GM12878 (cell line): ENCODE measurements at regions of chr10 and their contacts with region 1.

Region 1: GRCh38 chr10:95693668-95694534 is at the start of gene TCTN3:
- DNase-seq: peak; percentile 100
- ATAC-seq: peak; percentile 96
- H3K4me3 ChIP-seq: peak within 1 kb of the TSS; percentile 87
- H3K27ac ChIP-seq: peak within 1 kb of the TSS; percentile 79
- H3K4me1 ChIP-seq: peaks cover 13% of the 10 kb centered on the region
- H3K27me3 ChIP-seq: no peaks in the 10 kb centered on the region
- CTCF ChIP-seq: peak; percentile 97 to 100 (median 99); a peak in 5 of 6 replicates
- EP300 ChIP-seq: 0 out of 4 replicates have a peak, but pooled peaks of 1 of the 2 experiments have one; percentile 11
- POLR2A ChIP-seq: peak; percentile 89
- RAD21 ChIP-seq: peak; percentile 100
- polyA plus RNA-seq, gene TCTN3: 20.0 to 24.0 TPM

Region 2: DNA sequence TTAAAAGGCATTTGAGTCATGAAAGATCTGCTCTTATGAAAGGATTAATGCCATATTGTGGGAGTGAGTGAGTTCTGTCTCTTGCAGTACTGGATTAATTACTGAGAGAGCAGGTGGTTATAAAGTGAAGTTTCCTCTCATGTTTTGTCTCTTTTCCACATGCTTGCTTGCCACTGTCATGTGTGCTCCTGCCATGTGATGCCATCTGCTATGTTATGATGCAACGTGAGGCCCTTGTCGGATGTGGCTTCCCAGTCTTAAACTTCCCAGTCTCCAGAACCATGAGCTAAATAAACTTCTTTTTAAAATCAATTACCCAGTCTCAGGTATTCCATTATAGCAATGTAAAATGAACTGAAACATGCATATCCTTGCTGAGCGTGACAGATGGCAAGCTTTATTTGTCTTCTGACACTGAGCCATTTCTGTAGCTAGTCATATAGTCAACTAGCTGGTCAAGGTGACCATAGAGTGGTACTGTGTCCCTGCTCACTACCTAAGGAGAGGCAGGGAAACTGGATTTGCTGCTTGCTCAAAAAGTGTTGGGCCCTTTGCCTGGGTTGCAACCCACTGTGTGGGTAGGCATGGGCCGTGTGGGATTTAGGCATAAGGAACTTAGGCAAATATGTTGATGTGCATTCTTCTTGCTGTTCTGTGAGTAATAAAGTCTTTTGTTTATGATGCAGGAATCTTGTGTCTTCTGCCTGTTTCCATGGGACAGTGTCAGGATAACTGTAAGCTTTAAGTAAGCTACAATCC is 22.7 kb after region 1 on chr10:
- CTCF ChIA-PET with region 1: interaction called, 11 read pairs
- POLR2A ChIA-PET with region 1: interaction called, 3 read pairs
- RAD21 ChIA-PET with region 1: interaction called, 9 read pairs
- SMC1A ChIA-PET with region 1: interaction called, 10 read pairs
- in situ Hi-C with region 1: no loop called
- intact Hi-C with region 1: no loop called
- DNase-seq: no peak
- ATAC-seq: no peak
- H3K4me3 ChIP-seq: no peak overlapping the region
- H3K27ac ChIP-seq: no peak overlapping the region
- H3K4me1 ChIP-seq: no peaks in the 10 kb centered on the region
- H3K27me3 ChIP-seq: no peaks in the 10 kb centered on the region
- CTCF ChIP-seq: no peak
- EP300 ChIP-seq: no peak
- POLR2A ChIP-seq: no peak
- RAD21 ChIP-seq: no peak

Region 3: GRCh38 chr10:95783741-95784140 is 89.8 kb after region 1 on chr10:
- CTCF ChIA-PET with region 1: interaction called, 35 read pairs
- POLR2A ChIA-PET with region 1: interaction called, 12 read pairs
- RAD21 ChIA-PET with region 1: interaction called, 68 read pairs
- SMC1A ChIA-PET with region 1: interaction called, 31 read pairs
- in situ Hi-C with region 1: no loop called
- intact Hi-C with region 1: loop called (anchors 1 kb)
- DNase-seq: peak; percentile 94
- ATAC-seq: peak; percentile 50
- H3K4me3 ChIP-seq: no peak overlapping the region
- H3K27ac ChIP-seq: peak overlapping the region; percentile 99
- H3K4me1 ChIP-seq: peaks cover 79% of the 10 kb centered on the region
- H3K27me3 ChIP-seq: no peaks in the 10 kb centered on the region
- CTCF ChIP-seq: no peak
- EP300 ChIP-seq: peak; percentile 93 to 99
- POLR2A ChIP-seq: no peak
- RAD21 ChIP-seq: peak; percentile 8; the same call in 1 of the 2 replicates

Region 4: DNA sequence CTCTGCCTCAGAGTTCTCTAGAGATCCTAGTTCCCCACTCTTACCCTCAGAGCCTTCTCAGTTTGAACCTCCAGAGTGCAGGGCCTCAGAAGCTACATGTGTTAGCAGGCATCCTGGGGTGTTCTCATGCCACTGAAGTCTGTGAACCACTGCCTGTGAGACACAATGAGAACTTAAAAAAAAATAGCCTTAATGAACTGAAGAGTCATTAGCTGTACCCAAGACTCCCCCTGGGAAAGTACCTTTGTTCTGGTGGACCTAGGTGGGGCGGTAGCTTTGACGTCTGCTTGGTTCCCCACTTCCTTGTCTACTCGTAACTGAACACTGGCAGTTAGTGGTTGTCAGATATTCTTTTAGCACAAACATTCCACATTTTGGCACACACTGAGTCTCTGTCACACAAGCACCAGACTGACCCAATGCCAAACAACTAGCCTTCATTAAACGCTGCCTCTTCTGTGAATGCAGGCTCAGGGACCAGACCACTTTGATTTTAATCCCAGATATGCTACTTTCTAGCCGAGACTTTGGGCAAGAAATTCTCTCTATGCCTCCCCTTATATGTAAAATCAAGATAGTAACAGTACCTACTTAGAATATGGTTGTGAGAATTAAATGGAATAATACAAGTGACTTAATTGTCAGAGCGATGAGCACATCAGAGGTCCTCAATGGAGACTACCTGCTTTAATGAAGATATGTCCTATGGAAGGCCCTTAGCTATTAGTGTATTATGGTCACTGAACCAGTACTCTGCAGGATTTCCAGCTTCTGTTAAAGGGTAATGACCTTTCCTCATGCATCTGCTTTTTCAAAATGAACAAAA is 138.5 kb after region 1 on chr10:
- CTCF ChIA-PET with region 1: interaction called, 337 read pairs
- POLR2A ChIA-PET with region 1: interaction called, 72 read pairs
- RAD21 ChIA-PET with region 1: interaction called, 324 read pairs
- SMC1A ChIA-PET with region 1: interaction called, 267 read pairs
- in situ Hi-C with region 1: no loop called
- intact Hi-C with region 1: no loop called
- DNase-seq: peak; percentile 99
- ATAC-seq: peak; percentile 87
- H3K4me3 ChIP-seq: no peak overlapping the region
- H3K27ac ChIP-seq: peak overlapping the region; percentile 98
- H3K4me1 ChIP-seq: peaks cover 71% of the 10 kb centered on the region
- H3K27me3 ChIP-seq: no peaks in the 10 kb centered on the region
- CTCF ChIP-seq: no peak
- EP300 ChIP-seq: peak; percentile 99 to 100
- POLR2A ChIP-seq: peak; percentile 37
- RAD21 ChIP-seq: peak; percentile 36; the same call in 1 of the 2 replicates

Region 5: GRCh38 chr10:95889830-95890229 is 195.9 kb after region 1 on chr10:
- CTCF ChIA-PET with region 1: interaction called, 11 read pairs
- POLR2A ChIA-PET with region 1: no interaction called
- RAD21 ChIA-PET with region 1: interaction called, 7 read pairs
- SMC1A ChIA-PET with region 1: interaction called, 5 read pairs
- in situ Hi-C with region 1: no loop called
- intact Hi-C with region 1: no loop called
- DNase-seq: no peak
- ATAC-seq: no peak
- H3K4me3 ChIP-seq: no peak overlapping the region
- H3K27ac ChIP-seq: no peak overlapping the region
- H3K4me1 ChIP-seq: no peaks in the 10 kb centered on the region
- H3K27me3 ChIP-seq: no peaks in the 10 kb centered on the region
- CTCF ChIP-seq: no peak
- EP300 ChIP-seq: no peak
- POLR2A ChIP-seq: no peak
- RAD21 ChIP-seq: no peak

Region 6: GRCh38 chr10:96043033-96043932 is 349.4 kb after region 1 on chr10 and contains the start of gene CCNJ:
- CTCF ChIA-PET with region 1: interaction called, 4 read pairs
- POLR2A ChIA-PET with region 1: no interaction called
- RAD21 ChIA-PET with region 1: interaction called, 4 read pairs
- SMC1A ChIA-PET with region 1: no interaction called
- in situ Hi-C with region 1: no loop called
- intact Hi-C with region 1: loop called (anchors 1 kb)
- DNase-seq: peak; percentile 39
- ATAC-seq: peak; percentile 90
- H3K4me3 ChIP-seq: peak within 1 kb of the TSS; percentile 95
- H3K27ac ChIP-seq: peak within 1 kb of the TSS; percentile 74
- H3K4me1 ChIP-seq: peaks cover 6% of the 10 kb centered on the region
- H3K27me3 ChIP-seq: no peaks in the 10 kb centered on the region
- CTCF ChIP-seq: peak in 1 of 3 experiments; percentile 21; a peak in 1 of 6 replicates
- EP300 ChIP-seq: no peak
- POLR2A ChIP-seq: peak; percentile 84
- RAD21 ChIP-seq: no peak
- polyA plus RNA-seq, gene CCNJ: 0.56 to 1.5 TPM